T-cell (primary cell): ENCODE measurements at regions of chr4 and their contacts with region 1.

Region 1: DNA sequence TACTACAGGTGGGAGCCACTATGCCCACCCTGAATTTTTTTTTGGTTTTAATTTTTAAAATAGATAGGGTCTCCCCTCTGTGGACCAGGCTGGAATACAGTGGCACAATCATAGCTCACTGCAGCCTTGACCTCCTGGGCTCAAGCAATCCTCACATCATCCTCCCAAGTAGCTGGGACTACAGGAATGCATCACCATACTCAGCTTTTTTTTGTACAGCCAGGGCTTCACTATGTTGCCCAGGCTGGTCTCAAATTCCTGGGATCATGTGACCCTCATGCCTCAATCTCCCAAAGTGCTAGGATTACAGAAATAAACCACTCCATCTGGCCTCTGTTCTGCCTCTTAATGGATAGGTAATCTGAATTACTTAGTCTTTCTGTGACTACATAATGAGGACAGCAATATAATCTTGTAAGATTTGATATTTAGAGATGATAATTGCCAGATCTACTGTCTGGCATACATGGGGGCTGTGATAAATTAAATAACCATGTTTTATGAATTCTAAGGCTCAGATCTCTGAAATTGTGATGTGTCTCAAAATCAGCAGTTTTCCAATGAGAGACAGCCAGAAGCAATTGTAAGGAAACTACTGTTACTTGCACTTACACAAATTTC is 26.7 kb downstream of the PDS5A start:
- DNase-seq: no peak
- ATAC-seq: no peak
- H3K4me3 ChIP-seq: no peak overlapping the region
- H3K4me3 Mint-ChIP-seq: no peak overlapping the region
- H3K27ac ChIP-seq: no peak overlapping the region
- H3K27ac Mint-ChIP-seq: peak overlapping the region in 1 of 2 donors; percentile 55
- H3K4me1 ChIP-seq: peaks cover 8 to 32% of the 10 kb centered on the region in 2 experiments
- H3K4me1 Mint-ChIP-seq: peaks cover 60 to 69% (median 67%) of the 10 kb centered on the region in 3 donors
- H3K27me3 ChIP-seq: no peaks in the 10 kb centered on the region
- H3K27me3 Mint-ChIP-seq: no peaks in the 10 kb centered on the region

Region 2: DNA sequence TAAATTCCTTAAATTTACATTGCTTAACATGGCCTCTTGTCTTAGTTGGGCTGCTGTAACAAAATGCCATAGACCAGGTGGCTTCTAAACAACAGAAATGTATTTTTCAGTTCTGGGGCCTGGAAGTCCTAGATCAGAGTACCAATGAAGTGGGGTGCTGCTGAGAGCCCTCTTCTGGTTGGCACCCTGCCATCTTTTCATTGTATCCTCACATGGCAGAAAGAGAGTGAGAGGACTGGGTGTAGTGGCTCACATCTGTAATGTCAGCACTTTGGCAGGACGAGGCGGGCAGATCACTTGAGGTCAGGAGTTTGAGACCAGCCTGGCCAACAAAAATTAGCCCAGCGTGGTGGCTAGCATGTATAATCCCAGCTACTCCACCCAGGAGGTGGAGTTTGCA is 556.3 kb before region 1 on chr4:
- CTCF ChIA-PET with region 1: no interaction called
- POLR2A ChIA-PET with region 1: interaction called in 1 of 2 experiments, 10 read pairs
- DNase-seq: peak in 1 of 35 experiments; percentile 21
- ATAC-seq: no peak
- H3K4me3 ChIP-seq: no peak overlapping the region
- H3K4me3 Mint-ChIP-seq: no peak overlapping the region
- H3K27ac ChIP-seq: no peak overlapping the region
- H3K27ac Mint-ChIP-seq: no peak overlapping the region
- H3K4me1 ChIP-seq: no peaks in the 10 kb centered on the region
- H3K4me1 Mint-ChIP-seq: no peaks in the 10 kb centered on the region
- H3K27me3 ChIP-seq: no peaks in the 10 kb centered on the region
- H3K27me3 Mint-ChIP-seq: no peaks in the 10 kb centered on the region

Region 3: GRCh38 chr4:39505581-39505980 is 445.4 kb before region 1 on chr4:
- CTCF ChIA-PET with region 1: interaction called in 1 of 2 experiments, 10 read pairs
- POLR2A ChIA-PET with region 1: no interaction called
- DNase-seq: no peak
- ATAC-seq: no peak
- H3K4me3 ChIP-seq: no peak overlapping the region
- H3K4me3 Mint-ChIP-seq: no peak overlapping the region
- H3K27ac ChIP-seq: no peak overlapping the region
- H3K27ac Mint-ChIP-seq: no peak overlapping the region
- H3K4me1 ChIP-seq: no peaks in the 10 kb centered on the region
- H3K4me1 Mint-ChIP-seq: no peaks in the 10 kb centered on the region
- H3K27me3 ChIP-seq: no peaks in the 10 kb centered on the region
- H3K27me3 Mint-ChIP-seq: no peaks in the 10 kb centered on the region

Region 4: DNA sequence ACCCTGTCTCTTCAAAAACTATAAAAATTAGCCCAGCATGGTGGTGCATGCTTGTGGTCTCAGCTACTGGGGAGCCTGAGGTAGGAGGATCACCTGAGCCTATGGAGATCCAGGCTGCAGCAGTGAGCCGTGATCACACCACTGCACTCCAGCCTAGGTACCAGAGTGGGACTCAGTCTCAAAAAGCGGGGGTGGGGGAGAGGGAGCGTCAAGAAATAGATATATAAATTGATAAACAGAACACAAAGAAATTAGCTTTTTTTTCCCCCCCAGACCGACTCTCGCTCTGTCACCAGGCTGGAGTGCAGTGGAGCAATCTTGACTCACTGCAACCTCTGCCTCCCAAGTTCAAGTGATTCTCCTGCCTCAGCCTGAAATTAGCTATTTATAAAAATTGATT is 12.7 kb after region 1 on chr4:
- CTCF ChIA-PET with region 1: interaction called, 3 to 10 read pairs
- POLR2A ChIA-PET with region 1: interaction called in 1 of 2 experiments, 7 read pairs
- DNase-seq: no peak
- ATAC-seq: no peak
- H3K4me3 ChIP-seq: no peak overlapping the region
- H3K4me3 Mint-ChIP-seq: no peak overlapping the region
- H3K27ac ChIP-seq: no peak overlapping the region
- H3K27ac Mint-ChIP-seq: no peak overlapping the region
- H3K4me1 ChIP-seq: peaks cover 0 to 38% of the 10 kb centered on the region in 2 experiments
- H3K4me1 Mint-ChIP-seq: peaks cover 52 to 57% (median 57%) of the 10 kb centered on the region in 3 donors
- H3K27me3 ChIP-seq: no peaks in the 10 kb centered on the region
- H3K27me3 Mint-ChIP-seq: no peaks in the 10 kb centered on the region